Activated T-helper 2 cell treated with anti-CD3 and anti-CD28 coated beads, Interferon-gamma antibody, Interleukin-2, Interleukin-4, amounts not matched to agents 10 μg/mL and 5 μg/mL and 100 μg/mL, durations not matched to agents 14 hours and 24 hours and 36 hours (primary cell): ENCODE measurements at regions of chr17 and their contacts with region 1.

Region 1: GRCh38 chr17:57440522-57441485 is 184.5 kb downstream of the MSI2 start:
- DNase-seq: peak; percentile 62
- H3K4me3 Mint-ChIP-seq: peak overlapping the region; percentile 23
- H3K27ac Mint-ChIP-seq: peak overlapping the region; percentile 99
- H3K4me1 Mint-ChIP-seq: peaks cover 80% of the 10 kb centered on the region
- H3K27me3 Mint-ChIP-seq: no peaks in the 10 kb centered on the region

Region 2: GRCh38 chr17:57255776-57256681 is 184.8 kb before region 1 on chr17 and contains the start of gene MSI2:
- intact Hi-C with region 1: loop called (anchors 1 kb)
- DNase-seq: peak; percentile 82
- H3K4me3 Mint-ChIP-seq: peak within 1 kb of the TSS; percentile 97
- H3K27ac Mint-ChIP-seq: peak within 1 kb of the TSS; percentile 88
- H3K4me1 Mint-ChIP-seq: peaks cover 41% of the 10 kb centered on the region
- H3K27me3 Mint-ChIP-seq: peaks cover 2% of the 10 kb centered on the region
- total RNA-seq, gene MSI2: 181 and 198 TPM in 2 replicates

Region 3: GRCh38 chr17:57271821-57272220 is 169.0 kb before region 1 on chr17:
- intact Hi-C with region 1: no loop called
- DNase-seq: no peak
- H3K4me3 Mint-ChIP-seq: no peak overlapping the region
- H3K27ac Mint-ChIP-seq: no peak overlapping the region
- H3K4me1 Mint-ChIP-seq: peaks cover 35% of the 10 kb centered on the region
- H3K27me3 Mint-ChIP-seq: no peaks in the 10 kb centered on the region

Region 4: GRCh38 chr17:57408071-57408811 is 32.6 kb before region 1 on chr17:
- intact Hi-C with region 1: loop called (anchors 5 kb)
- DNase-seq: peak; percentile 11
- H3K4me3 Mint-ChIP-seq: no peak overlapping the region
- H3K27ac Mint-ChIP-seq: peak overlapping the region; percentile 43
- H3K4me1 Mint-ChIP-seq: peaks cover 33% of the 10 kb centered on the region
- H3K27me3 Mint-ChIP-seq: no peaks in the 10 kb centered on the region

Region 5: GRCh38 chr17:57463103-57463851 is 22.5 kb after region 1 on chr17:
- intact Hi-C with region 1: loop called (anchors 1 kb)
- DNase-seq: peak; percentile 67
- H3K4me3 Mint-ChIP-seq: peak overlapping the region; percentile 53
- H3K27ac Mint-ChIP-seq: peak overlapping the region; percentile 90
- H3K4me1 Mint-ChIP-seq: peaks cover 64% of the 10 kb centered on the region
- H3K27me3 Mint-ChIP-seq: no peaks in the 10 kb centered on the region